WTC11 (cell line): ENCODE measurements at regions of chr5 and their contacts with region 1.

Region 1: DNA sequence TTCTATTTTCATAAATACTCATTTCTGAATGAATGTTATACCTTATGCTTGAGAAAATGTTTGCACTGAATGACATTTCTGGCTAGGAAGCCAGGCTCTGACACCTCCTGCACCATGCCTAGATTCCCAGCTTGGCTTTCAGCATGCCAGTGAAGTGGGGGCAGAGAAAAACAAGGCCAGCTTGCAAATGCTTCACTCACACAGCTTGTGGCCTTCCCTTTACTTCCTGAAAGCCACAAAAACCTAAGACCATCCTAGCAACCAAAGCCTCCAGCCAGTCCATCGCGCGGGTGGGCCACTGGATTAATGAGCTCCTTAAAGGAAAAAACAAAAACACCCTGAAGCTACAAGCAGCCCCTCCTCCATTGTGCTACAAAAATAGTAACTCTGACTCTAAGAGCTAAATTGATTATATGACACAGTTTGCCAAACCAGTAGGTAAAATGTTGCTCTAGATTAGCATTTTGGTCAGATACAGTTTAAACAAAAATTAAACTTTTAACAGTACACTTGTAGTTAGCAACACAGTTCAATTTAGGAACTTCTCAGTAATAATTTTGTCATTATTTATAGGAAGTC is 159.9 kb downstream of the TSSK1B start:
- DNase-seq: peak; percentile 37
- ATAC-seq: peak; percentile 84
- H3K4me3 Mint-ChIP-seq: no peak overlapping the region
- H3K27ac Mint-ChIP-seq: peak overlapping the region; percentile 95
- H3K4me1 Mint-ChIP-seq: peaks cover 81% of the 10 kb centered on the region
- H3K27me3 Mint-ChIP-seq: no peaks in the 10 kb centered on the region
- CTCF ChIP-seq: no peak

Region 2: DNA sequence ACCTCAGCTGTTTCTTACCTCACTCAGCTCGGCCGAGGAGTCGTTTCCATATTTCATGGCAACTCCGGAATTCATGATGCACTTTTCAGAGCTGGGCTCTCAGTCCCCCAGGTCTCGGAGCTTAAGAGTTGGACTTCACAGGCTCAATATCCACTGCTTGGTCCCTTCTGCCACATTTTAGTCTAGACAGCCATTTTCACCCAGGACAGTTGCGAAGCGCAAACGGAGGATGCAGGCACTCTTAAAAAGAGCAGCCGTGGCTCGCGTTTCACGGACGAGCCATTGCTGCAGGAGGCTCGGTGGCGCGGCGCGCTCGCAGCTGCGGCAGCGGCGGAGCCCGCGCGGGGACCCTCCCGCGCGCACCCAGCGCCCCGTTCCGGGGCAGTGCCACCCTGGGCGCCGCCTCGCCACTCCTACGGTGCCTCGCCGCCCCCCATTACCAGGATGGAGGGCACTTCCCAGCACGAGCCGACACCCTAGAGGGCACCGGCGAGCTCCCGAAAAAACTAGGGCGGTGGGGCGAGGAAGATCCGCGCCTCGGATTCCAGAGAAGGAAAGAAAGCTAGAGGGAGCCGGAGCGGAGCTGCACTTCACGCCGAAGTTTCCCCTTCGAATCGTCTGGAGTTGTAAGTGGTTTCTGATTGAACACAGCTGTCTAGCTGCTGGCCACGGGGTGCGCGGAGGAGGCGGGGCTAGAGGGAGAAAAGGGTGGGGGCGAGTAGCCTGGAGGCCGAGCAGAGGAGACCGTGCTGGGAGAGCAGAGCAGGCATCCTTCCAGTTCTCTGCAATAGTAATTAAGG is 19.6 kb after region 1 on chr5:
- CTCF ChIA-PET with region 1: interaction called, 10 read pairs
- POLR2A ChIA-PET with region 1: interaction called, 8 read pairs
- DNase-seq: peak; percentile 87
- ATAC-seq: peak; percentile 83
- H3K4me3 Mint-ChIP-seq: peak overlapping the region; percentile 92
- H3K27ac Mint-ChIP-seq: peak overlapping the region; percentile 52; the same call in 1 of the 2 replicates
- H3K4me1 Mint-ChIP-seq: peaks cover 54% of the 10 kb centered on the region
- H3K27me3 Mint-ChIP-seq: peaks cover 11% of the 10 kb centered on the region
- CTCF ChIP-seq: no peak